CD8-positive, alpha-beta T cell (primary cell): ENCODE measurements at regions of chr5 and their contacts with region 1.

Region 1: DNA sequence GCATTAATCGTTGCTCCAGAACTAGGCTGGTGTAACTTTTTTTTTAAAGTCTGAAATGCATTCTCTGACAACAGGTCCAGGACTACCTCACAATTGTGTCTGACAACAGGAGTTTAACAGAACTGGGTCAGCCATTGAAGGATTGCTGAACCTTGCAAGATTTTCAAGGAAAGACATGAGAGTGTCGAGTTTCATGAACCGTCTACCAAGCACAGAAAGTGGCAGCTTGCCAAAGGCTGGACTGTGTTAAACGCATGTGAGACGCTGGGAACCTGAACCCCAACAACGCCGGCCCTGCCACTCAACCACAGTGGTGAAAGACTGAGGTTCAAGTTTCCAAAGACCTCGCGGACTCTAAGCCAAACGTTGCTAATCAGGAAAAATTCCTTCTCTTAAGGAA is 79.1 kb downstream of the LHFPL2 start:
- DNase-seq: no peak
- ATAC-seq: no peak
- H3K4me3 ChIP-seq: no peak overlapping the region
- H3K4me3 Mint-ChIP-seq: no peak overlapping the region
- H3K27ac ChIP-seq: no peak overlapping the region
- H3K27ac Mint-ChIP-seq: no peak overlapping the region
- H3K4me1 ChIP-seq: no peaks in the 10 kb centered on the region
- H3K4me1 Mint-ChIP-seq: no peaks in the 10 kb centered on the region
- H3K27me3 ChIP-seq: no peaks in the 10 kb centered on the region
- H3K27me3 Mint-ChIP-seq: no peaks in the 10 kb centered on the region
- CTCF ChIP-seq: no peak

Region 2: DNA sequence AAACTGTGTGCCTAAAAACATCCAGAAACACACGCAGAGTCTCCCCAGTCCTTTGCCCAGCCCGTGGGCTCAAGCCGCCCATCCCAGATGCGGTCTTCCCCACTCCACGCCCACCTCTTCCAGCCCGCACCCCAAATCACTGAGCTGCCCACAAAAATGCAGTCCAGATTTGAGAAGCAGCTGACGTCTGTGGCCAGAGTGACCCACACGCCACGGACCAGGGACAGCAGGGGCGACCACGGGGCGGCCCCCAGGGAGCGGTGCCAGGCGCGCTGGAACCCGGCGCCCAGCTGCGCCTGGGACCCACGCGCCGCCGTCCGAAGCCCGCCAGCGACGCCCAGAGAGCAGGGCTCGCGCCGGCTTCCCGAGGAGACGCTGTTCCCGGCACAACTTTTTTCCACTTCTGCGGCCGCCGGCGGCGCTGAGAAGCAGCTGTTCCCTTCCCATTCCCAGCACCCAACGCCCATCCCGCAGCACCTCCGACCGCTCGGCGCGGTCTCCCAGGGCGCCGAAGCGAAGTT is 78.5 kb after region 1 on chr5:
- CTCF ChIA-PET with region 1: no interaction called
- POLR2A ChIA-PET with region 1: no interaction called
- intact Hi-C with region 1: loop called in 1 of 2 experiments (anchors 2 kb)
- DNase-seq: peak in 2 of 9 experiments; percentile 1 to 3
- ATAC-seq: no peak
- H3K4me3 ChIP-seq: peak overlapping the region; percentile 7 to 35
- H3K4me3 Mint-ChIP-seq: peak overlapping the region; percentile 77
- H3K27ac ChIP-seq: no peak overlapping the region
- H3K27ac Mint-ChIP-seq: no peak overlapping the region
- H3K4me1 ChIP-seq: peaks cover 15% of the 10 kb centered on the region
- H3K4me1 Mint-ChIP-seq: peaks cover 16% of the 10 kb centered on the region
- H3K27me3 ChIP-seq: peaks cover 8 to 14% of the 10 kb centered on the region in 2 experiments
- H3K27me3 Mint-ChIP-seq: peaks cover 55% of the 10 kb centered on the region
- CTCF ChIP-seq: no peak